K562 (cell line): ENCODE measurements at regions of chr2 and their contacts with region 1.

Region 1: GRCh38 chr2:148644883-148645538 is 460 bp downstream of the EPC2 start:
- DNase-seq: peak; percentile 93 to 98 (median 96)
- ATAC-seq: peak; percentile 89
- H3K4me3 ChIP-seq: peak overlapping the region; percentile 82
- H3K27ac ChIP-seq: peak overlapping the region; percentile 93
- H3K4me1 ChIP-seq: peaks cover 14 to 24% of the 10 kb centered on the region in 2 experiments
- H3K27me3 ChIP-seq: no peaks in the 10 kb centered on the region; a peak in 1 of 5 replicates
- CTCF ChIP-seq: peak; percentile 36 to 57 (median 55); a peak in 4 of 6 replicates
- EP300 ChIP-seq: no peak
- POLR2A ChIP-seq: peak; percentile 78
- RAD21 ChIP-seq: peak; percentile 26 to 40; a peak in 3 of 4 replicates

Region 2: GRCh38 chr2:148519013-148519412 is 126.0 kb before region 1 on chr2:
- CTCF ChIA-PET with region 1: no interaction called
- POLR2A ChIA-PET with region 1: no interaction called
- in situ Hi-C with region 1: no loop called
- intact Hi-C with region 1: no loop called
- DNase-seq: no peak
- ATAC-seq: no peak
- H3K4me3 ChIP-seq: no peak overlapping the region
- H3K27ac ChIP-seq: no peak overlapping the region
- H3K4me1 ChIP-seq: no peaks in the 10 kb centered on the region
- H3K27me3 ChIP-seq: peaks cover 4 to 24% of the 10 kb centered on the region in 2 experiments; a peak in 4 of 5 replicates
- CTCF ChIP-seq: no peak
- EP300 ChIP-seq: no peak
- POLR2A ChIP-seq: no peak
- RAD21 ChIP-seq: no peak

Region 3: DNA sequence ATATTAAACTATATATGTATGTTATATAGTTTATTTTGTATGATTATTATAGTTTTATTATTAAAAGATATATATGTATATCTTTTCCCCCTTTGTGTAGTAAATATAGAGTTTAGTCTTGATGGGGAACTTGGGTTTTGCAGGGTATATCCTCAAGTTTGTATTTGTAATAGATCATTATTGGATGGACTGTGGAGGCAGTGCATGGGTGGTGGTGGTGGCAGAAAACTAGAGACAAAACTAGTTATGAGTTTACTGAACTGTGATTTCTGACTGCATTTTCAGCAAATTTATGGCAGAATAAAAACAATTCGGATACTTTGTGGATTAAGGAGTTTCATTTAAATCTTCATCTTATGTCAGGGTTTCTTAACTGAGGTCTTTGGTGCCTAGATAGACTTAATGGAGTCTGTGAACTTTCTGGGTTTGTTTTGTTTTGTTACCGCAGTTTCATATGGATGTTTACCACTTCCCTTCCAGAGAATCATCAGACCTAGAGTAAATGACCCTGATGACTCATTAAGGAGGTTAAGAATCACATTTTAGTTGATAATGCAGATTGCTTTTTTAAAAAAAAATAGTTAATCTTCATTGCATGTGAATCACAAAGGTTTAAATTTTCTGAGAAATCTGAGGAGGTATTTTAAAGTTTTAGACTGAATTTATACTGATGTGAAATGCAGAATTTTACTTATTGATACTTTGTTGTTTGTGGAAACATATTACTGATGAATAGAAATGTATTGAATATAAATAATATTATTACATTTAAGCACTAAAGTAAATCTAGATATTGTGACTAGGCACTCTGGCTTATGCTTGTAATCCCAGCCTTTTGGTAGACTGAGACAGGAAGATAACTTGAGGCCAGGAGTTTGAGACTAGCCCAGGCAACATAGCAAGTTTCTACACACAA is 14.1 kb after region 1 on chr2:
- CTCF ChIA-PET with region 1: no interaction called
- POLR2A ChIA-PET with region 1: interaction called, 16 read pairs
- in situ Hi-C with region 1: no loop called
- intact Hi-C with region 1: no loop called
- DNase-seq: no peak
- ATAC-seq: 0 out of 3 replicates have a peak, but pooled peaks have one; percentile 17
- H3K4me3 ChIP-seq: no peak overlapping the region
- H3K27ac ChIP-seq: no peak overlapping the region
- H3K4me1 ChIP-seq: peaks cover 0 to 10% of the 10 kb centered on the region in 2 experiments; a peak in 3 of 5 replicates
- H3K27me3 ChIP-seq: no peaks in the 10 kb centered on the region
- CTCF ChIP-seq: no peak
- EP300 ChIP-seq: no peak
- POLR2A ChIP-seq: no peak
- RAD21 ChIP-seq: no peak

Region 4: GRCh38 chr2:148813603-148814065 is 168.6 kb after region 1 on chr2:
- CTCF ChIA-PET with region 1: interaction called, 3 read pairs
- POLR2A ChIA-PET with region 1: interaction called, 3 read pairs
- in situ Hi-C with region 1: no loop called
- intact Hi-C with region 1: loop called (anchors 5 kb)
- DNase-seq: peak; percentile 49 to 64 (median 50)
- ATAC-seq: peak; percentile 93
- H3K4me3 ChIP-seq: no peak overlapping the region
- H3K27ac ChIP-seq: no peak overlapping the region
- H3K4me1 ChIP-seq: no peaks in the 10 kb centered on the region; a peak in 1 of 5 replicates
- H3K27me3 ChIP-seq: peaks cover 9 to 45% of the 10 kb centered on the region in 2 experiments; a peak in 2 of 5 replicates
- CTCF ChIP-seq: peak; percentile 41 to 65 (median 58)
- EP300 ChIP-seq: no peak
- POLR2A ChIP-seq: no peak
- RAD21 ChIP-seq: no peak

Region 5: GRCh38 chr2:148989882-148990493 is 345.0 kb after region 1 on chr2:
- CTCF ChIA-PET with region 1: interaction called, 29 read pairs
- POLR2A ChIA-PET with region 1: no interaction called
- in situ Hi-C with region 1: no loop called
- intact Hi-C with region 1: loop called (anchors 1 kb)
- DNase-seq: peak; percentile 49 to 80 (median 62)
- ATAC-seq: peak; percentile 94
- H3K4me3 ChIP-seq: no peak overlapping the region
- H3K27ac ChIP-seq: no peak overlapping the region
- H3K4me1 ChIP-seq: no peaks in the 10 kb centered on the region
- H3K27me3 ChIP-seq: peaks cover 0 to 6% of the 10 kb centered on the region in 2 experiments; a peak in 1 of 5 replicates
- CTCF ChIP-seq: peak; percentile 75 to 87 (median 80)
- EP300 ChIP-seq: no peak
- POLR2A ChIP-seq: no peak
- RAD21 ChIP-seq: peak; percentile 98